ENCODE measurements at regions of chr2 and their contacts with region 1.

Region 1: GRCh38 chr2:106130248-106130998 is 63.7 kb downstream of the UXS1 start:
- DNase-seq: no peak
- H3K4me3 ChIP-seq: peak overlapping the region in 2 of 3 donors; percentile 26 to 28
- H3K27ac ChIP-seq: peak overlapping the region; percentile 8 to 33
- H3K4me1 ChIP-seq: no peaks in the 10 kb centered on the region
- H3K27me3 ChIP-seq: no peaks in the 10 kb centered on the region
- CTCF ChIP-seq: no peak
- POLR2A ChIP-seq: no peak

Region 2: DNA sequence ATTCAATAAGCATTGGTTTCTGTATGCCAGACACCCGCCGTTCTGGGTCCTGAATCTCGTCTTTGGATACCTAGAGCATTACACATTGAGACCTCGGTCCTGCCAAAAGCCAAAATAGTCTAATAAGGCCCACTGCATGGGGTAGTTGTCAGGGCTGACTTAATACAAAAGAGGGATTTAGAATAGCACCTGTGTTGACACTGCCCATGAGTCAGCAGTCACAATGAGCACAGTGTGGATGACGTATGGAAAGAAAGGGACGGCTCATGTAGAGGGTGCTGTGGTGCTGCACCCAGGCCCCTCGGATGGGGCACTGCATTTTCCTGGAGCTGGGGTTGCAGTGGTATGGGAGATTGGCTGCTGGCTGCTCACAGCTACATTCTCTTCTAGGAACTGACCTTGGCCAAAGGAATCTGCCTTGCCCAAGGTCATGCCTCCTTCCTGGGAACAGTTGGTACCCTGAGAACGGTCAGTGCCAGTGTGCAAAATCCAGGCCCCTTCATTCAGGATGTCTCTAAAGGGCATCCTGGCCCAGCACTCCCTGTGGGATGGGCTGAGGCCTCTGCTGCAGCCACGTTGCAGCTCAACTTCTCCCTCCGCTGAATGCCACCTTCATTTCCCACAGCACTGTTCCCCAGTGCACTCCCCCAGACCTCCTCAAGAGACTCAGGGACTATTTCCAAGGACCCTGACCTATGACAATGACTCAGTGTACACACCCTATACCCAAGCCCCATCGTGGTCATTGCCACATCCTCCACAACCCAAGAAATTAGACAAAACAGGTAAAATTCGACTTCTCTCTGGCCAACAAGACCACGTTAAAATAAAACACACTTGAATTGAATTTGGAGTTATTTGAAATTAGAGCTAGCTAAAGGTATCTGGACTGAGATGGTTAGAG is 512.4 kb before region 1 on chr2:
- intact Hi-C with region 1: loop called (anchors 5 kb)
- DNase-seq: no peak
- H3K4me3 ChIP-seq: no peak overlapping the region
- H3K27ac ChIP-seq: no peak overlapping the region
- H3K4me1 ChIP-seq: no peaks in the 10 kb centered on the region
- H3K27me3 ChIP-seq: no peaks in the 10 kb centered on the region
- CTCF ChIP-seq: no peak
- POLR2A ChIP-seq: no peak

Region 3: GRCh38 chr2:106098081-106098480 is 32.3 kb before region 1 on chr2:
- intact Hi-C with region 1: no loop called
- DNase-seq: no peak
- H3K4me3 ChIP-seq: no peak overlapping the region
- H3K27ac ChIP-seq: no peak overlapping the region
- H3K4me1 ChIP-seq: no peaks in the 10 kb centered on the region
- H3K27me3 ChIP-seq: no peaks in the 10 kb centered on the region
- CTCF ChIP-seq: peak in 1 of 3 donors; percentile 22
- POLR2A ChIP-seq: no peak

Region 4: DNA sequence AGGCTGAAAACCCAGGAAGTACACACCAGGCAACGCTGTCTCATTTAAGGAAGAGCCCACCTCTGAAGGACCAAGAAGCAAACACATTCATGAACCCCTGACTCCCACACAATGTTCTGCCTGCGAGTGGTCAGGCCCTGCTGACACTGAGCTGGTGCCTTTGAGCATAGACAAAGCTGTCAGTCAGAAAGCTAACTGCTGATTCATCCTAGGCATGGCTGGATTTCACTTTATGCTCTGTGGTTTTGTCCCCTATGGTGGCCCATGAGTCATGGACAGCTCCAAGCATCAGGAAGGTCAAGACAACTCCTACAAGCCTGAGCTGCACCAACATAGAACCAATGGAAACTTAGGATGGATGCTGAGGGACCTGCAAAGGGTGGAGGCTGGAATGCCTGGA is 15.2 kb before region 1 on chr2:
- intact Hi-C with region 1: no loop called
- DNase-seq: no peak
- H3K4me3 ChIP-seq: no peak overlapping the region
- H3K27ac ChIP-seq: no peak overlapping the region
- H3K4me1 ChIP-seq: no peaks in the 10 kb centered on the region
- H3K27me3 ChIP-seq: no peaks in the 10 kb centered on the region
- CTCF ChIP-seq: no peak
- POLR2A ChIP-seq: no peak

Region 5: DNA sequence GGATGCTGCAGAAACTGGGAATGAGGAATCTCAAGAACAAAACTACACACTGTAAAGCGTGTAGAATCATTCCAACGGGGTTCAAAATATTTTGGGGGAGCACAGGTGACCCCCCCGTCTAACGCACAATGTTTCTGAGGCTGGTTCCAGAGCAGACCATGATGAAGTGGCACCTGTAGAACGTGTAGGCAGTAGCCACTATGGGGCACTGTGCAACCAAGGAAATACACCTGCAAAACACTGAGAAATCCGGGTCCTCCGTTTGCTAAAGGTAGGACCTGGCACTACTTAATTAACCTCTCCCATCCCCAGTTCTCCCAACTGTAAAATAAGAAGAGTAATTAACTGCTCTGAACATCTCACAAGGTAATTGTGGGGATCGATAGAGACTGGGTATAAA is 733.0 kb after region 1 on chr2:
- intact Hi-C with region 1: no loop called
- DNase-seq: no peak
- H3K4me3 ChIP-seq: no peak overlapping the region
- H3K27ac ChIP-seq: no peak overlapping the region
- H3K4me1 ChIP-seq: no peaks in the 10 kb centered on the region
- H3K27me3 ChIP-seq: no peaks in the 10 kb centered on the region
- CTCF ChIP-seq: no peak
- POLR2A ChIP-seq: no peak

Measured in breast epithelium (tissue), 4 donors.